ENCODE measurements at regions of chr12 and their contacts with region 1.

Region 1: DNA sequence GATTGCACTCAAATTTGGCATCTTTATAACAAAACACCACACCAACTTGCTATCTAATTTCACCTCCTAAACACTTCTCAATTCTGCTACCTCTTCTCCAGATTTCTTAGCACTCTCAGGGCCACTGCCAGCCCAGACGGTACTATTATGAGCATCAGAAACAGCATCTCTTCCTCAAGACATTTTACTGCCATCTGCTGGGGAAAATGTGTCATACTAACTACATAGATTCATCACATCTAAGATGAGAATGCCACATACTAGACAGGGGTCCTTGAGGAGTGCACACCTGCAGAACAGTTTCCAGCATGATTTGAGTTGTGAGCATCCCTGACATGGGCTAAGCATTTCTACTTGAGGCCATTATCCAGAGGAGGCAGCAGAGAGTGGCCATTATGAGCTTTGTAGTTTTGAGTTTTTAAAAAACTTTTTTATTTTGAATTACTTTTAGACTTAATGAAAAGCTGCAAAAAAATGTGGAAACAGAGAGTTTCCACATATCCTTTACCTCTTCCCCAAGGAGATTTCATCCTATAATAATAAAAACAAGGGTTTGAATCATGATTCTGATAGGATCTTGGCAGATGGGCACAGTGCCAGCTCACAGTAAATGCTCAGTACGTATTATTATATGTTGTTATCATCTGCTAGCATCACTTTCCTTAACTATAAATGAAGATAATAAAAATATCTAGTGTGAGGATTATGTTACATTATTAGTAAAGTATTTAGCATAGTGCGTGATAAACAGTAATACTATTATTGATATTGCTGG is 15.2 kb upstream of the GRIP1 start:
- DNase-seq: peak in 1 of 2 donors; percentile 11
- ATAC-seq: peak in 5 of 8 donors; percentile 38 to 74 (median 48)
- H3K4me3 ChIP-seq: no peak overlapping the region
- H3K27ac ChIP-seq: no peak overlapping the region
- H3K4me1 ChIP-seq: peaks cover 0 to 7% (median 0%) of the 10 kb centered on the region in 9 donors
- H3K27me3 ChIP-seq: peaks cover 0 to 6% (median 0%) of the 10 kb centered on the region in 7 donors
- CTCF ChIP-seq: peak; percentile 10 to 67 (median 58)

Region 2: DNA sequence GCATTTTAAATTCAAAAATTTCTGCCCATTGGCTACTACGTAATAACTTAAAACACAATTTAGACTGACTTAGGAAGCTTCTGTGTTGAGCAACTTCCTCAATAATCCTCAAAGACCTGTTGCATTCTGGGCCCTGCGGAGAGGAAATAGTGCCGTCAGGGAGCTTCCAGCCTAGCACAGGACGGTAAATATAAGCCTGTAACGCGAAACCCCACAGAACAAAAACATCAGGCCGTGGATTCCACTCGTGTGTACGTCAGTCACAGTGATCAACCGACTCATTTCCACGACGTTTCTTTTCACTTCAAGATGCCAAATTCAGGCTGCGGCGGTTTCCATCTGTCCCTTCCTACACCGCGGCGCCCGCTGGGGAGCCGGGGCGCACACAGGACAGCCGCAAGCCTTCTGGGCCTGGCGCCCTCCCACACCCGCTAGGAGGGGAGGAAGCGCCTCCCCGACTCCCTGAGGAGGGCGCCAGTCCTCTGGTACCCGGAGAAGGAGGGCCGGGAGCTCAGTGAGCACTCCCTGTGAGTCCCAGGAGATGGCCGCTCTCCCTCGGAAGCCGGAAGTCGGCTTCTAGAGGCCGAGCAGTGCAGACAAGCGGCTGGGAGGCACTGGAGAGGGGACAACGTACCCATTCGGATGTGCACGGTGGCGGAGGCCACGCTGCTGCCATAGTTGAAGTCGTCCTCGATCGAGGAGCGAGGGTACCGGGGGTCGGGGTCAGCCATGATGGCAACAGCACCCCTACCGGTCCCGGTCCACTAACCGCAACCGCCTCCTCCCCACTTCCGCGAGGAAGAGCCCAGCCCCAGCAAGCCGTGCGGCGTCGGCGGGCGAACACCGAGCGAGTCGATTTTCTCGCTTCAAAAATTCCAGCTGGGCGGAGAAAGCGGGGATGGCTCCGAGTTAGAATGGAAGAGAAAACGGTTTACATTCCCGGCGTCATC is 524.6 kb before region 1 on chr12 and contains the start of gene TMBIM4:
- intact Hi-C with region 1: loop called in 1 of 10 experiments (anchors 10 kb)
- DNase-seq: peak; percentile 89 to 91
- ATAC-seq: peak; percentile 95 to 99 (median 98)
- H3K4me3 ChIP-seq: peak within 1 kb of the TSS; percentile 51 to 90 (median 78)
- H3K27ac ChIP-seq: peak within 1 kb of the TSS; percentile 91 to 100 (median 98)
- H3K4me1 ChIP-seq: peaks cover 3 to 47% (median 22%) of the 10 kb centered on the region in 9 donors
- H3K27me3 ChIP-seq: no peaks in the 10 kb centered on the region
- CTCF ChIP-seq: peak; percentile 53 to 85 (median 62)
- total RNA-seq, gene TMBIM4: 54.8 to 79.3 (median 66.0) TPM

Region 3: DNA sequence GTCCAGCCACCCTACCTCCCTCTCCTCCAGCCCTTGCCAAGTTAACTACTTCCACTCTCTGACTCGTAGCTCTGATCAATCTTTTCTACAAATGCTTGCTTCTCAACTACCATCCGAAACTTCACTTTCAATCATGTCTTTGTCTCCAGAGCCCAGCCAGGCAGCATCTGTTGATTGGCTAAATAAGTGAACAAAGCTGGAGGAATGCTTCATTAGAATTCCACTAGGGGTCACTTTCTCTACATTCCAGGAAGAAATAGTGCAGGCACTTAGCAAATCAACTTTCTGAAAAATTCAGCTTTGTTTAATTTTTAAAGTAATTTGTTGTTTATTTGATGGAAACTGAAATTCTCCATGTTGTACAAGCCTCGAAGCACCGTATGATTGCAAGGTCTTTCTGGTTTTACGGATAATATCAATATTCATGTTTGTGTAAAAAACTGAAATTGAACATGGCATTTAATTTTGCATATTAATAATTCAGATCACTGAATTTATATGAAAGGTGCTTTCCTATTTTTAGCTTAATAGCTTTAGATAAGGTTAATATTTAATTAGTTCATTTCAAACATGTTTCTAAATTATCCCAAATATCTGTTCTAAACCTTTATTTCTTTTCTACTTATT is 424.2 kb before region 1 on chr12:
- intact Hi-C with region 1: loop called in 5 of 10 experiments (anchors 5 to 10 kb)
- DNase-seq: no peak
- ATAC-seq: peak in 2 of 8 donors; percentile 30 to 58
- H3K4me3 ChIP-seq: no peak overlapping the region
- H3K27ac ChIP-seq: peak overlapping the region in 1 of 10 donors; percentile 82
- H3K4me1 ChIP-seq: peaks cover 0 to 34% (median 0%) of the 10 kb centered on the region in 9 donors
- H3K27me3 ChIP-seq: peaks cover 0 to 7% (median 0%) of the 10 kb centered on the region in 7 donors
- CTCF ChIP-seq: peak; percentile 17 to 71 (median 59)

Region 4: GRCh38 chr12:66352197-66352596 is 341.9 kb before region 1 on chr12:
- intact Hi-C with region 1: loop called in 1 of 10 experiments (anchors 5 kb)
- DNase-seq: peak; percentile 8 to 17
- ATAC-seq: peak in 2 of 8 donors; percentile 48 to 67
- H3K4me3 ChIP-seq: no peak overlapping the region
- H3K27ac ChIP-seq: no peak overlapping the region
- H3K4me1 ChIP-seq: no peaks in the 10 kb centered on the region
- H3K27me3 ChIP-seq: no peaks in the 10 kb centered on the region
- CTCF ChIP-seq: peak in 7 of 9 donors; percentile 30 to 51 (median 32)

Region 5: DNA sequence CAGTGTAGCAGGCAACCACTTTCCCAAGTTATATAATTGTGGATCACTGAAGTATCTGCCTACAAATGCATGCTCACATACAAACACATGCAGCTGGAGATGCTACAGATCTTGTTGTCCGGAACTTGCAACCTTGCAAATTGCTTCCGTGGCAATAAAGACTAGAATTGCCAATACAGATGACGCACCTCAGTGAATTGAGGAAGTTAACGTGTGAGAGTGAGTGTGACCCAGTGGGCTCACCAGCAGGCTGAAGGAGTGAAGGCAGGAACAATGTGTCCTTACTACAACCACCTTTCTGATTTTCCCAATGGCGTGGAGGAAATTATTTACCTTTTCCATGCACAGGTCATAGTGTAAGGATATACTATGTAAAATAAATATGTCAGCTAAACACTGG is 74.2 kb after region 1 on chr12:
- intact Hi-C with region 1: no loop called
- DNase-seq: no peak
- ATAC-seq: no peak
- H3K4me3 ChIP-seq: no peak overlapping the region
- H3K27ac ChIP-seq: no peak overlapping the region
- H3K4me1 ChIP-seq: no peaks in the 10 kb centered on the region
- H3K27me3 ChIP-seq: no peaks in the 10 kb centered on the region
- CTCF ChIP-seq: no peak

Region 6: DNA sequence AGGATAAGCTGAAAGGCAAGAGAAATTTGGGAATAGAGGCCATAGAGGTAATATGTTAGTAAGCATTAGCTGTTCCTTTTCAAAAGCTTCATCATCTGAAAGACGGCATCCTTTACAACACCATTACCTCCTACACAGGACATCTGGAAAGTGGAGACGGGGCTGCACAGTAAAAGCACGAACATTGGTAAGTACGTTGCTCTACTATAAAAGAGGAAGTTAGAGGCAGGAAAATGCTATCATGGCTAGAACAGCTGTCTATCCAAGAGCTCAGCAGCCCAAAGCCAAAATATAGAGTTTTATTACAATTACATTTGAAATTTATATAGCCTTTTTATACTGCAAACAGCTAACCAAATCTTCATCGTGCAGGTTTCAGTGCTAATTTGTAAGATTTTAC is 157.0 kb after region 1 on chr12:
- intact Hi-C with region 1: loop called in 1 of 10 experiments (anchors 10 kb)
- DNase-seq: no peak
- ATAC-seq: no peak
- H3K4me3 ChIP-seq: no peak overlapping the region
- H3K27ac ChIP-seq: no peak overlapping the region
- H3K4me1 ChIP-seq: no peaks in the 10 kb centered on the region
- H3K27me3 ChIP-seq: peaks cover 0 to 4% (median 0%) of the 10 kb centered on the region in 7 donors
- CTCF ChIP-seq: no peak

Region 7: GRCh38 chr12:66860752-66861750 is 167.0 kb after region 1 on chr12:
- intact Hi-C with region 1: loop called in 9 of 10 experiments (anchors 1 to 10 kb)
- DNase-seq: peak; percentile 19 to 28
- ATAC-seq: peak in 1 of 8 donors; percentile 39
- H3K4me3 ChIP-seq: no peak overlapping the region
- H3K27ac ChIP-seq: no peak overlapping the region
- H3K4me1 ChIP-seq: no peaks in the 10 kb centered on the region
- H3K27me3 ChIP-seq: peaks cover 0 to 13% (median 3%) of the 10 kb centered on the region in 7 donors
- CTCF ChIP-seq: peak; percentile 61 to 92 (median 84)

Region 8: GRCh38 chr12:67222302-67222701 is 528.2 kb after region 1 on chr12:
- intact Hi-C with region 1: loop called in 3 of 10 experiments (anchors 5 to 10 kb)
- DNase-seq: no peak
- ATAC-seq: no peak
- H3K4me3 ChIP-seq: no peak overlapping the region
- H3K27ac ChIP-seq: no peak overlapping the region
- H3K4me1 ChIP-seq: no peaks in the 10 kb centered on the region
- H3K27me3 ChIP-seq: peaks cover 0 to 6% (median 0%) of the 10 kb centered on the region in 7 donors
- CTCF ChIP-seq: peak in 6 of 9 donors; percentile 14 to 46 (median 30)

Region 9: GRCh38 chr12:68505970-68506369 is 1811.9 kb after region 1 on chr12:
- intact Hi-C with region 1: no loop called
- DNase-seq: no peak
- ATAC-seq: no peak
- H3K4me3 ChIP-seq: no peak overlapping the region
- H3K27ac ChIP-seq: no peak overlapping the region
- H3K4me1 ChIP-seq: peaks cover 0 to 3% (median 0%) of the 10 kb centered on the region in 9 donors
- H3K27me3 ChIP-seq: no peaks in the 10 kb centered on the region
- CTCF ChIP-seq: no peak

Measured in heart right ventricle (tissue), 16 donors.